CD4-positive, alpha-beta T cell (primary cell): ENCODE measurements at regions of chr2 and their contacts with region 1.

Region 1: GRCh38 chr2:176079831-176080539 is 3.8 kb downstream of the EVX2 start:
- DNase-seq: peak in 2 of 14 experiments; percentile 16 to 41
- ATAC-seq: no peak
- H3K4me3 ChIP-seq: no peak overlapping the region
- H3K4me3 Mint-ChIP-seq: peak overlapping the region; percentile 73
- H3K27ac ChIP-seq: no peak overlapping the region
- H3K27ac Mint-ChIP-seq: peak overlapping the region; percentile 83
- H3K4me1 ChIP-seq: peaks cover 30% of the 10 kb centered on the region
- H3K4me1 Mint-ChIP-seq: peaks cover 29% of the 10 kb centered on the region
- H3K27me3 ChIP-seq: peaks cover 85 to 92% of the 10 kb centered on the region in 2 experiments
- H3K27me3 Mint-ChIP-seq: peaks cover 86% of the 10 kb centered on the region
- CTCF ChIP-seq: no peak

Region 2: DNA sequence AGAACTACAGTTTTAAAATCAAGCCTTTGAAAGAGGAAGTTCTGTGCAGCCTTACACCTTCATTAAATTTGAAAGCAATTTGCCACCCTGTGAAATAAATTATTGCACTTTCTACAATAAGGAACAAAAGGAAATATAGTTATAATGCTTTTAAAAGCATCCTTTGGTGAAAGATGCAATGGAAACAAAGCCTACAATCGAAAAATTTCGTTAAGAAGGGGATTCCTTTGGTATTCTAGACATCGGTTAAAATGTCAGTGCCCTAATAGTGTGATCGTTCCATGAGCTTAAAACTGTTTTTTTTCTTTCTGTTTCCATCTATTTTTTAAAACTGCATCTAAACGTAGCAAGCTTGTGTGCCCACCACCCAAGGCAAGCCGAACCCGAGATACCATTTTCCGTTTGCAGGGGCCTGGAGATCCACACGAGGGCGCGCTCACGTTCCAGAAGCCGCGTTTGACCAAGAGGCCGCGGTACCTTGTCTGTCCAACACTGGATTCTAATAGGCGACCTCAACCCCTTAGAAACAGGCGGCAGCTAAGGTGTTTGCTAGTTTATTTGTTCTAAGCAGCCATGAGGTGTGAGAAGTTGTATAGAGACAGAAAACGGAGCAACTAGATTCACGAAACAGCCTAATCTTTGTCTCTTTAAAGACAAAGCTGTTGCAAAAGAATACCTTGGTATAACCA is 31.1 kb after region 1 on chr2:
- CTCF ChIA-PET with region 1: no interaction called
- POLR2A ChIA-PET with region 1: interaction called, 3 read pairs
- intact Hi-C with region 1: loop called (anchors 5 kb)
- DNase-seq: no peak
- ATAC-seq: no peak
- H3K4me3 ChIP-seq: no peak overlapping the region
- H3K4me3 Mint-ChIP-seq: no peak overlapping the region
- H3K27ac ChIP-seq: no peak overlapping the region
- H3K27ac Mint-ChIP-seq: no peak overlapping the region
- H3K4me1 ChIP-seq: peaks cover 22% of the 10 kb centered on the region
- H3K4me1 Mint-ChIP-seq: peaks cover 19% of the 10 kb centered on the region
- H3K27me3 ChIP-seq: peaks cover 87 to 93% of the 10 kb centered on the region in 2 experiments
- H3K27me3 Mint-ChIP-seq: peaks cover 89% of the 10 kb centered on the region
- CTCF ChIP-seq: no peak

Region 3: GRCh38 chr2:176118601-176119339 is 38.8 kb after region 1 on chr2:
- CTCF ChIA-PET with region 1: no interaction called
- POLR2A ChIA-PET with region 1: no interaction called
- intact Hi-C with region 1: loop called (anchors 5 kb)
- DNase-seq: peak in 1 of 14 experiments; percentile 43
- ATAC-seq: no peak
- H3K4me3 ChIP-seq: no peak overlapping the region
- H3K4me3 Mint-ChIP-seq: no peak overlapping the region
- H3K27ac ChIP-seq: no peak overlapping the region
- H3K27ac Mint-ChIP-seq: no peak overlapping the region
- H3K4me1 ChIP-seq: peaks cover 24% of the 10 kb centered on the region
- H3K4me1 Mint-ChIP-seq: peaks cover 12% of the 10 kb centered on the region
- H3K27me3 ChIP-seq: peaks cover 92 to 98% of the 10 kb centered on the region in 2 experiments
- H3K27me3 Mint-ChIP-seq: peaks cover 92% of the 10 kb centered on the region
- CTCF ChIP-seq: no peak

Region 4: GRCh38 chr2:176328149-176328548 is 248.2 kb after region 1 on chr2:
- CTCF ChIA-PET with region 1: no interaction called
- POLR2A ChIA-PET with region 1: no interaction called
- intact Hi-C with region 1: no loop called
- DNase-seq: no peak
- ATAC-seq: no peak
- H3K4me3 ChIP-seq: no peak overlapping the region
- H3K4me3 Mint-ChIP-seq: no peak overlapping the region
- H3K27ac ChIP-seq: no peak overlapping the region
- H3K27ac Mint-ChIP-seq: no peak overlapping the region
- H3K4me1 ChIP-seq: no peaks in the 10 kb centered on the region
- H3K4me1 Mint-ChIP-seq: no peaks in the 10 kb centered on the region
- H3K27me3 ChIP-seq: no peaks in the 10 kb centered on the region
- H3K27me3 Mint-ChIP-seq: no peaks in the 10 kb centered on the region
- CTCF ChIP-seq: no peak